Breast epithelium (tissue), 4 donors: ENCODE measurements at regions of chrX and their contacts with region 1.

Region 1: DNA sequence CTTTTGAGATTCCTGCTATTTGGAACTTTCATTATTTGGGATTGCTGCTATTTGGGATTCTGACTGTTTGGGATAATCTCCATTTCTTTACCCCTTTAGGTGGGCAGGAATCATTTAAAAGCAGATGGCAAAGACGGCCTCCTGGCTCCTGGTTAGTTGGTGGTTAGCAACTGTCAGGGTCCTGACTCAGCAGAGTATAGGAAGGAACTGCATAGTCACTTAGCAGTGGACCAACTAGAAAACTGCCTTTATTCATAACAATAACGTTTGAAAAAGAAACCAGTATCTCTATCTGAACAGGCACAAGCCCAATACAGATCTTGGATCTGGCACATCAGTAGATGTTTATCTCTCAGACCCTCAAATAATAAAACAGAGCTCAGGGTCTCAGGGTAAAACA is 469.7 kb upstream of the FGF16 start:
- DNase-seq: no peak
- H3K4me3 ChIP-seq: no peak overlapping the region
- H3K27ac ChIP-seq: no peak overlapping the region
- H3K4me1 ChIP-seq: no peaks in the 10 kb centered on the region
- H3K27me3 ChIP-seq: no peaks in the 10 kb centered on the region
- CTCF ChIP-seq: no peak
- POLR2A ChIP-seq: no peak

Region 2: GRCh38 chrX:77003956-77004355 is 26.5 kb after region 1 on chrX:
- intact Hi-C with region 1: loop called (anchors 2 kb)
- DNase-seq: no peak
- H3K4me3 ChIP-seq: no peak overlapping the region
- H3K27ac ChIP-seq: no peak overlapping the region
- H3K4me1 ChIP-seq: no peaks in the 10 kb centered on the region
- H3K27me3 ChIP-seq: peaks cover 0 to 15% of the 10 kb centered on the region in 2 donors
- CTCF ChIP-seq: no peak
- POLR2A ChIP-seq: no peak

Region 3: GRCh38 chrX:78517124-78517523 is 1539.7 kb after region 1 on chrX:
- intact Hi-C with region 1: no loop called
- DNase-seq: no peak
- H3K4me3 ChIP-seq: no peak overlapping the region
- H3K27ac ChIP-seq: no peak overlapping the region
- H3K4me1 ChIP-seq: no peaks in the 10 kb centered on the region
- H3K27me3 ChIP-seq: peaks cover 0 to 13% of the 10 kb centered on the region in 2 donors
- CTCF ChIP-seq: no peak
- POLR2A ChIP-seq: no peak